CD4-positive, alpha-beta T cell (primary cell): ENCODE measurements at regions of chr1 and their contacts with region 1.

Region 1: GRCh38 chr1:77759071-77760028 is at the start of gene USP33:
- DNase-seq: peak; percentile 86 to 97 (median 92)
- ATAC-seq: peak; percentile 95
- H3K4me3 ChIP-seq: peak within 1 kb of the TSS; percentile 80
- H3K4me3 Mint-ChIP-seq: peak within 1 kb of the TSS; percentile 90
- H3K27ac ChIP-seq: peak within 1 kb of the TSS; percentile 29 to 88
- H3K27ac Mint-ChIP-seq: peak within 1 kb of the TSS; percentile 87
- H3K4me1 ChIP-seq: peaks cover 23% of the 10 kb centered on the region
- H3K4me1 Mint-ChIP-seq: peaks cover 57% of the 10 kb centered on the region
- H3K27me3 ChIP-seq: no peaks in the 10 kb centered on the region
- H3K27me3 Mint-ChIP-seq: no peaks in the 10 kb centered on the region
- CTCF ChIP-seq: no peak
- total RNA-seq, gene USP33: 69.7 to 71.6 TPM

Region 2: GRCh38 chr1:77688939-77689338 is 70.4 kb before region 1 on chr1:
- CTCF ChIA-PET with region 1: interaction called, 6 read pairs
- POLR2A ChIA-PET with region 1: interaction called, 10 read pairs
- intact Hi-C with region 1: loop called (anchors 2 to 10 kb)
- DNase-seq: no peak
- ATAC-seq: no peak
- H3K4me3 ChIP-seq: no peak overlapping the region
- H3K4me3 Mint-ChIP-seq: no peak overlapping the region
- H3K27ac ChIP-seq: no peak overlapping the region
- H3K27ac Mint-ChIP-seq: no peak overlapping the region
- H3K4me1 ChIP-seq: peaks cover under 1% of the 10 kb centered on the region
- H3K4me1 Mint-ChIP-seq: peaks cover 3% of the 10 kb centered on the region
- H3K27me3 ChIP-seq: no peaks in the 10 kb centered on the region
- H3K27me3 Mint-ChIP-seq: no peaks in the 10 kb centered on the region
- CTCF ChIP-seq: no peak

Region 3: GRCh38 chr1:77739235-77739634 is 20.1 kb before region 1 on chr1:
- CTCF ChIA-PET with region 1: no interaction called
- POLR2A ChIA-PET with region 1: no interaction called
- intact Hi-C with region 1: no loop called
- DNase-seq: no peak
- ATAC-seq: no peak
- H3K4me3 ChIP-seq: no peak overlapping the region
- H3K4me3 Mint-ChIP-seq: no peak overlapping the region
- H3K27ac ChIP-seq: no peak overlapping the region
- H3K27ac Mint-ChIP-seq: no peak overlapping the region
- H3K4me1 ChIP-seq: no peaks in the 10 kb centered on the region
- H3K4me1 Mint-ChIP-seq: peaks cover 16% of the 10 kb centered on the region
- H3K27me3 ChIP-seq: no peaks in the 10 kb centered on the region
- H3K27me3 Mint-ChIP-seq: no peaks in the 10 kb centered on the region
- CTCF ChIP-seq: no peak

Region 4: GRCh38 chr1:77779529-77780281 is 20.4 kb after region 1 on chr1 and contains the start of gene MIGA1:
- CTCF ChIA-PET with region 1: interaction called, 4 read pairs
- POLR2A ChIA-PET with region 1: interaction called, 24 read pairs
- intact Hi-C with region 1: loop called (anchors 1 kb)
- DNase-seq: peak; percentile 78 to 96 (median 84)
- ATAC-seq: peak; percentile 98
- H3K4me3 ChIP-seq: peak within 1 kb of the TSS; percentile 96
- H3K4me3 Mint-ChIP-seq: peak within 1 kb of the TSS; percentile 97
- H3K27ac ChIP-seq: peak within 1 kb of the TSS; percentile 32 to 55
- H3K27ac Mint-ChIP-seq: peak within 1 kb of the TSS; percentile 89
- H3K4me1 ChIP-seq: peaks cover 14% of the 10 kb centered on the region
- H3K4me1 Mint-ChIP-seq: peaks cover 43% of the 10 kb centered on the region
- H3K27me3 ChIP-seq: no peaks in the 10 kb centered on the region
- H3K27me3 Mint-ChIP-seq: no peaks in the 10 kb centered on the region
- CTCF ChIP-seq: no peak
- total RNA-seq, gene MIGA1: 12.2 to 15.8 TPM

Region 5: GRCh38 chr1:77796695-77797416 is 37.5 kb after region 1 on chr1:
- CTCF ChIA-PET with region 1: no interaction called
- POLR2A ChIA-PET with region 1: no interaction called
- intact Hi-C with region 1: loop called in 1 of 2 experiments (anchors 5 kb)
- DNase-seq: no peak
- ATAC-seq: no peak
- H3K4me3 ChIP-seq: no peak overlapping the region
- H3K4me3 Mint-ChIP-seq: no peak overlapping the region
- H3K27ac ChIP-seq: no peak overlapping the region
- H3K27ac Mint-ChIP-seq: no peak overlapping the region
- H3K4me1 ChIP-seq: no peaks in the 10 kb centered on the region
- H3K4me1 Mint-ChIP-seq: peaks cover 41% of the 10 kb centered on the region
- H3K27me3 ChIP-seq: no peaks in the 10 kb centered on the region
- H3K27me3 Mint-ChIP-seq: no peaks in the 10 kb centered on the region
- CTCF ChIP-seq: no peak

Region 6: GRCh38 chr1:77874804-77875445 is 115.6 kb after region 1 on chr1:
- CTCF ChIA-PET with region 1: no interaction called
- POLR2A ChIA-PET with region 1: no interaction called
- intact Hi-C with region 1: no loop called
- DNase-seq: no peak
- ATAC-seq: no peak
- H3K4me3 ChIP-seq: no peak overlapping the region
- H3K4me3 Mint-ChIP-seq: no peak overlapping the region
- H3K27ac ChIP-seq: no peak overlapping the region
- H3K27ac Mint-ChIP-seq: no peak overlapping the region
- H3K4me1 ChIP-seq: no peaks in the 10 kb centered on the region
- H3K4me1 Mint-ChIP-seq: no peaks in the 10 kb centered on the region
- H3K27me3 ChIP-seq: no peaks in the 10 kb centered on the region
- H3K27me3 Mint-ChIP-seq: no peaks in the 10 kb centered on the region
- CTCF ChIP-seq: no peak

Region 7: DNA sequence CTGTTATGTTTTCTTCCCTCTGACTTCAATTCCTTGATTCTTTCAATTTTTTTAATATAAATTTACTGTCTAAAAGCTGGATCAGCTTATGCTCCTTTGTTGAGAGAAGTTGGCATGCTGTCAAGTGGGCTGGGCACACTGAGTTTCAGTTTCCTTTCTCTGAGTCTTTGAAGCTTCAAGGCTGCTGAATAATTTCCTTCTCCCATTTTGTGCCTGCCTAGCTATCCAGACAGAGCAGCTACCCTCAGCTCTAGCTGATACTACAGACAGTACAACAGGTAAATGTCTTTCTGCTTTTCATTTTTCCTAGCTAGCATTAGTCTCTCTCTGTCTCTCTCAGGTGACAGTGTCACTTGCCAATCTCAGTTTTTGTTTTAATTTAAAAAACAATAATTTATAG is 890.3 kb after region 1 on chr1 and contains the start of gene IFI44:
- CTCF ChIA-PET with region 1: no interaction called
- POLR2A ChIA-PET with region 1: no interaction called
- intact Hi-C with region 1: loop called in 1 of 2 experiments (anchors 10 kb)
- DNase-seq: peak; percentile 59 to 90 (median 73)
- ATAC-seq: peak; percentile 81
- H3K4me3 ChIP-seq: peak within 1 kb of the TSS; percentile 65
- H3K4me3 Mint-ChIP-seq: peak within 1 kb of the TSS; percentile 92
- H3K27ac ChIP-seq: peak within 1 kb of the TSS; percentile 30 to 55
- H3K27ac Mint-ChIP-seq: peak within 1 kb of the TSS; percentile 80
- H3K4me1 ChIP-seq: peaks cover 30% of the 10 kb centered on the region
- H3K4me1 Mint-ChIP-seq: peaks cover 81% of the 10 kb centered on the region
- H3K27me3 ChIP-seq: no peaks in the 10 kb centered on the region
- H3K27me3 Mint-ChIP-seq: no peaks in the 10 kb centered on the region
- CTCF ChIP-seq: no peak
- total RNA-seq, gene IFI44: 67.4 to 70.0 TPM

Region 8: GRCh38 chr1:79646895-79647294 is 1887.5 kb after region 1 on chr1:
- CTCF ChIA-PET with region 1: no interaction called
- POLR2A ChIA-PET with region 1: no interaction called
- intact Hi-C with region 1: no loop called
- DNase-seq: no peak
- ATAC-seq: no peak
- H3K4me3 ChIP-seq: no peak overlapping the region
- H3K4me3 Mint-ChIP-seq: no peak overlapping the region
- H3K27ac ChIP-seq: no peak overlapping the region
- H3K27ac Mint-ChIP-seq: no peak overlapping the region
- H3K4me1 ChIP-seq: no peaks in the 10 kb centered on the region
- H3K4me1 Mint-ChIP-seq: no peaks in the 10 kb centered on the region
- H3K27me3 ChIP-seq: no peaks in the 10 kb centered on the region
- H3K27me3 Mint-ChIP-seq: no peaks in the 10 kb centered on the region
- CTCF ChIP-seq: no peak